ENCODE measurements at regions of chr20 and their contacts with region 1.

Region 1: GRCh38 chr20:50750145-50750671 is 18.8 kb downstream of the PARD6B start:
- DNase-seq: no peak
- ATAC-seq: no peak
- H3K4me3 Mint-ChIP-seq: no peak overlapping the region
- H3K27ac Mint-ChIP-seq: no peak overlapping the region
- H3K4me1 Mint-ChIP-seq: peaks cover 29% of the 10 kb centered on the region
- H3K27me3 Mint-ChIP-seq: no peaks in the 10 kb centered on the region

Region 2: DNA sequence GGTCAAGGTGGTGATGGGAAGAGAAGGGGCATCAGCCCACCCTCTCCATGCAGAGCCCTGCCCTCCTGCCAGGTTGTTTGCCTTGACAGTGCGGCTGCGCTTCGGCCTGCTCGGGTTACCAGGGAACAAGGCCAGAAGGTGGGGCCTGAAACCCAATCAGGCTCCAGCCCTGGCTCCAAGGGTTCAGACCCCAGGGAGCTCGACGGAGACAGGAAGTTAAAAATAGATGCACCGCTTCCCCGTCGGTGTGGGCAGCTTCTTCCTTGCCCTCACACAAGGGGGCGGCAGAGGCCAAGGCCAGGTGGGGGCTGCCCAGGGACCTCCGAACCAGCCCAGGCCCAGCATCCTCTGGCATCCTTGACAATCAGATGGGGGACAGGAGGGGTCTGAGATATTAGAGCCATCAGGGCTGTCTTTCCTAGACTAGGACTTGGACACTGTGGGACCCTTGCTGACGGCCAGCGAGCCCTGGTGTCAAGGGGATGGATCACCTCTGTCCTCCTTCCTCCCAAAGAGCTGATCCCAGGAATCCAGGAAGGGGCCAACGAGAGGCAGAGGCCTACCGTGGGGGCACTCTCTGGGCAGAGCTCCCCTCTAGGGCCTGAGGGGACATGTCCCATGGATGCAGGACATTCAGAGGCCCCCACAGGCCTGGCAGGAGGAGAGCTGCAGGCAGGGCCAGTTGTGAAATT is 124.1 kb before region 1 on chr20:
- CTCF ChIA-PET with region 1: interaction called, 21 read pairs
- POLR2A ChIA-PET with region 1: interaction called, 4 read pairs
- intact Hi-C with region 1: loop called in 1 of 2 experiments (anchors 1 kb)
- DNase-seq: peak; percentile 62
- ATAC-seq: peak; percentile 44
- H3K4me3 Mint-ChIP-seq: no peak overlapping the region
- H3K27ac Mint-ChIP-seq: no peak overlapping the region
- H3K4me1 Mint-ChIP-seq: no peaks in the 10 kb centered on the region
- H3K27me3 Mint-ChIP-seq: no peaks in the 10 kb centered on the region

Region 3: GRCh38 chr20:50635667-50636503 is 114.3 kb before region 1 on chr20:
- CTCF ChIA-PET with region 1: interaction called, 27 read pairs
- POLR2A ChIA-PET with region 1: no interaction called
- intact Hi-C with region 1: no loop called
- DNase-seq: peak; percentile 84
- ATAC-seq: peak; percentile 79
- H3K4me3 Mint-ChIP-seq: no peak overlapping the region
- H3K27ac Mint-ChIP-seq: no peak overlapping the region
- H3K4me1 Mint-ChIP-seq: no peaks in the 10 kb centered on the region
- H3K27me3 Mint-ChIP-seq: peaks cover 3% of the 10 kb centered on the region

Region 4: GRCh38 chr20:50663095-50663850 is 86.9 kb before region 1 on chr20:
- CTCF ChIA-PET with region 1: interaction called, 9 read pairs
- POLR2A ChIA-PET with region 1: no interaction called
- intact Hi-C with region 1: loop called in 1 of 2 experiments (anchors 1 kb)
- DNase-seq: peak; percentile 28
- ATAC-seq: no peak
- H3K4me3 Mint-ChIP-seq: no peak overlapping the region
- H3K27ac Mint-ChIP-seq: no peak overlapping the region
- H3K4me1 Mint-ChIP-seq: no peaks in the 10 kb centered on the region
- H3K27me3 Mint-ChIP-seq: peaks cover 2% of the 10 kb centered on the region

Region 5: DNA sequence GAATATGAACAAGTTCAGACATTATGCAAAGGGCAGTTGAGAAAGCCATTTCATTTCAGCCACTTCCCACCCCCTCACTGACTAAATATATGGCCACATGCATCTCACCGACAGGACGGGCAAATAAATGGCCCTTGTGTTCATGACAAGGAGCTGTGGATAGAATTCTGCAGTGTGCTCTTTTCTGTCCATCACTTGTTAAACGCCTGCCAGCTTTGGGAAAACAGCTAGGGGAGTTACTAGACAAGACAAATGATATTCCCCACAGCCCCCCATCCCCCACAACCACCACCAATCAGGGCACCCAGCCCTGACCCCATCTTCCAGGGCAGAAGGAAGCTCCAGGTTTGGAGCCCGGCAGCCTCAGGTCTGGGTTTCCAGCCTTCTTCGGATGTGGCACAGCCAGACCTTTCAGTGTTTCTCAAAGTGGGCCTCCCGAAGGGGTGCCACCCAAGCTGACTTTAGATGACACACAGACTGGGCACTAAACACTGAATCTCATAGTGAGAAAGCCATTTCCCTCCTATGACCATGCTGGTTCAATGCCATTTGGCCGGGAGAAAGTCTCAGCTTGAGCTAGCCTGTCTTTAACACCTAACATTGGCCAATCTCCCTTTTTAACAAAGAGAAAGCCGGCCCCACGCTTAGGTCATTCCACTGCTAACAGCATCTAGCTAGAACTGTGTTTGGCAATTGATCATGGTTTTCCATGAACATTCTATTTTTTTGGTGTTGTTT is 54.9 kb before region 1 on chr20:
- CTCF ChIA-PET with region 1: interaction called, 14 read pairs
- POLR2A ChIA-PET with region 1: no interaction called
- intact Hi-C with region 1: no loop called
- DNase-seq: no peak
- ATAC-seq: no peak
- H3K4me3 Mint-ChIP-seq: no peak overlapping the region
- H3K27ac Mint-ChIP-seq: no peak overlapping the region
- H3K4me1 Mint-ChIP-seq: peaks cover 8% of the 10 kb centered on the region
- H3K27me3 Mint-ChIP-seq: peaks cover 34% of the 10 kb centered on the region

Region 6: GRCh38 chr20:50724851-50725721 is 25.1 kb before region 1 on chr20:
- CTCF ChIA-PET with region 1: interaction called, 27 read pairs
- POLR2A ChIA-PET with region 1: interaction called, 6 read pairs
- intact Hi-C with region 1: no loop called
- DNase-seq: peak; percentile 91
- ATAC-seq: peak; percentile 98
- H3K4me3 Mint-ChIP-seq: no peak overlapping the region
- H3K27ac Mint-ChIP-seq: no peak overlapping the region
- H3K4me1 Mint-ChIP-seq: peaks cover 15% of the 10 kb centered on the region
- H3K27me3 Mint-ChIP-seq: no peaks in the 10 kb centered on the region

Region 7: DNA sequence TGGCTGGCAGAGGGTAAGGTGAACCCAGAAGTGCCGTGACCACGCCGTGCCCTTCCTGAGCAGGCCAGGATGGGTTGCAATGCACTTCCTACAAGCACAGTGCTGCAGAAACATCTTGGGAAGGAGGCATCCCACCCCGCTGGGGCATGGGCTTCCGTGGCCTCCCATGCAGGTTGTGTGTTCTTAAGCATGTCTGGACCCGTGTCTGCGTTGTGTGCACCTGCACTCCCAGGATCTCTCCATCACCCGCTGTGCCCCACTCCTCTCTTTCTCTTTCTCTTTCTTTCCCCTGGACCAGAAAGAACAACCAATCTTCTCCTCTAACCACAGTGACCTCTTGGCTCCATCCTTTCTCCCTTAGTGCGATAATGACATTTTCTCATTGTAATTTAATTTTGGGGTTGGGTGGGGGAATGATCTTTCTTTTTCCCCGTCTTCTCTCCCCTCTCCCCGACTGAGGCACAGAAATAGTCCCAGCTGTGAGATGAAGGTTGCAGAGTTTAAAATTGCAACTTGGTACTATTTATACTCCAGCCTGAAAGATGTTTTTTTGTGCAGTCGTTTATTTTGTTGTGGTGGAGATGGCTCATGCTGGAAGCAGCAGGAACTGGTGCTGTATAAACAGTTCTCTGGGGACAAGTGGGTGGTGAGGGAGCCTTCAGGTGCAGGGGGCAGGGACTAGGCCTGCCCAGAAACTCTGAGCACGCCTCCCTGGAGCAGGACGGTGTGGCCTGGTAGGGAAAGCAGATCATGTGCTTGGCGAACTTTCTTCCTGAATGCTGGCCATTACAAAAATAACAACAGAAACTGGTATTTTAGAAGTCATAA is 65.2 kb after region 1 on chr20:
- CTCF ChIA-PET with region 1: no interaction called
- POLR2A ChIA-PET with region 1: no interaction called
- intact Hi-C with region 1: no loop called
- DNase-seq: peak; percentile 57
- ATAC-seq: peak; percentile 60
- H3K4me3 Mint-ChIP-seq: peak overlapping the region; percentile 60
- H3K27ac Mint-ChIP-seq: peak overlapping the region; percentile 71
- H3K4me1 Mint-ChIP-seq: peaks cover 28% of the 10 kb centered on the region
- H3K27me3 Mint-ChIP-seq: no peaks in the 10 kb centered on the region

Measured in activated CD4-positive, alpha-beta T cell treated with anti-CD3 and anti-CD28 coated beads for 36 hours (primary cell).